Right cardiac atrium (tissue), 5 donors: ENCODE measurements at regions of chr1 and their contacts with region 1.

Region 1: GRCh38 chr1:89598450-89599331 is 34.2 kb upstream of the LRRC8C start:
- DNase-seq: no peak
- ATAC-seq: peak; percentile 60 to 81
- H3K4me3 ChIP-seq: no peak overlapping the region
- H3K27ac ChIP-seq: no peak overlapping the region
- H3K4me1 ChIP-seq: peaks cover 4% of the 10 kb centered on the region
- H3K27me3 ChIP-seq: no peaks in the 10 kb centered on the region

Region 2: GRCh38 chr1:89394851-89395250 is 203.8 kb before region 1 on chr1:
- intact Hi-C with region 1: no loop called
- DNase-seq: no peak
- ATAC-seq: no peak
- H3K4me3 ChIP-seq: no peak overlapping the region
- H3K27ac ChIP-seq: no peak overlapping the region
- H3K4me1 ChIP-seq: no peaks in the 10 kb centered on the region
- H3K27me3 ChIP-seq: no peaks in the 10 kb centered on the region

Region 3: DNA sequence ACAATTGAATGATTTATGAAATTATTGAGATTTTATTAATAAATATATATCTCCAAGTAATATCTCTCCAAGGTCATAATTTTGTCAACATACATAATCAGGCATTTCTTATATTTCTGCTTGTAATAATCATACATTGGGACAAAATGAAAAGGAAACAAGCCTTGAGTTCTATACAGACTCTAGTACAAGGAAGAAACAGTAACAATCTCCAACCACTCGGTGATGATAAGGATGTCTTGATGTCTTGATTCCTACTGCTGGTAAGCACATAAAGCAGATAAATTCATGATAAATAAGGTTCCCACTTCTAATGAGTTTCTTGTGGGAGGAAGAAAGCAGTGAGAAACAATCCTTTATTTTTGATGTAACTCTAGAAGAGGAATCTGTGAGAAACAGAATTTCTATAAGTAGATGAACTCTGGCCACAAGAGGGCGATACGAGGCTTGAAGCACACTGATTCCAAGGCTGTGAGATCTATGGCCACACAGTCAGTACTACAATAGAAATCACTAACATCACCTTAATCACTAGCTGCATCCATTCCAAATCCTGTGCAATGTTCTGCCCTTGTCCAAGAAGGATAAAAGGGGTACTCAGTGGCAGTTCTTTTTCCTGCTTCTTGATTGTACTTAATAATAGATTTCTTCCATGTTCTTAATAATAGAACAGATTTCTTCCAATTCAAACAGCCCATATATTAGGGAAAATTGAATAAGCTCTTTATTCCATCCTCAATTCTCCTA is 115.5 kb before region 1 on chr1:
- intact Hi-C with region 1: loop called in 3 of 4 experiments (anchors 2 to 10 kb)
- DNase-seq: peak; percentile 66 to 84 (median 71)
- ATAC-seq: peak; percentile 78 to 81
- H3K4me3 ChIP-seq: no peak overlapping the region
- H3K27ac ChIP-seq: no peak overlapping the region
- H3K4me1 ChIP-seq: no peaks in the 10 kb centered on the region
- H3K27me3 ChIP-seq: no peaks in the 10 kb centered on the region

Region 4: DNA sequence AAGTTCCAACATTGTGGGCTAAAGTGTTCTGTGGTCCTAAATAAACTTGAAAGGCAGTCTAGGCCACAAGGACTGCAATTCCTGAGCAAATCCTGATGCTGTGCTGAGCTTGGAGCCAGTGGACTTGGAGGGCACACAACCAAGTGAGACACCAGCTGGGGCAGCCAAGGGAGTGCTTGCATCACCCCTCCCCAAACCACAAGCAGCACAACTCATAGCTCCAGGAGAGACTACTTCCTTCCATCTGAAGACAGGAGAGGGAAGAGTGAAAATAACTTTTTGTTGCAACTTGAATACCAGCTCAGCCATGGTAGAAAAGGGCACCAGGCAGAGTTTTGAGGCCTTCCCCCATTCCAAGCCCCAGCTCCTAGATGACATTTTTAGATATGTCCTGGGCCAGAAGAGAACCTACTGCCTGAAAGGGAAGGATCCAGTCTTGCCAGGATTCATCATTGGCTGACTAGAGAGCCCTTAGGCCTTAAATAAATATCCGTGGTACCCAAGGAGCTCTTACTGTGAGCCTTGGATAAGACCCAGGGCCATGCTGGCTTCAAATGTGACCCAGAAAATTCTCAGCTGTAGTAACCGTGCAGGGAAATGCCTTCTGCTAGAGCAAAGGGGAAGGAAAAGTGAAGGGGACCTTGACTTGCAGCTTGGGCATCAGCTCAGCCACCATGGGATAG is 109.5 kb before region 1 on chr1:
- intact Hi-C with region 1: loop called in 2 of 4 experiments (anchors 5 to 10 kb)
- DNase-seq: no peak
- ATAC-seq: no peak
- H3K4me3 ChIP-seq: no peak overlapping the region
- H3K27ac ChIP-seq: no peak overlapping the region
- H3K4me1 ChIP-seq: no peaks in the 10 kb centered on the region
- H3K27me3 ChIP-seq: no peaks in the 10 kb centered on the region